ENCODE measurements at regions of chr19 and their contacts with region 1.

Region 1: DNA sequence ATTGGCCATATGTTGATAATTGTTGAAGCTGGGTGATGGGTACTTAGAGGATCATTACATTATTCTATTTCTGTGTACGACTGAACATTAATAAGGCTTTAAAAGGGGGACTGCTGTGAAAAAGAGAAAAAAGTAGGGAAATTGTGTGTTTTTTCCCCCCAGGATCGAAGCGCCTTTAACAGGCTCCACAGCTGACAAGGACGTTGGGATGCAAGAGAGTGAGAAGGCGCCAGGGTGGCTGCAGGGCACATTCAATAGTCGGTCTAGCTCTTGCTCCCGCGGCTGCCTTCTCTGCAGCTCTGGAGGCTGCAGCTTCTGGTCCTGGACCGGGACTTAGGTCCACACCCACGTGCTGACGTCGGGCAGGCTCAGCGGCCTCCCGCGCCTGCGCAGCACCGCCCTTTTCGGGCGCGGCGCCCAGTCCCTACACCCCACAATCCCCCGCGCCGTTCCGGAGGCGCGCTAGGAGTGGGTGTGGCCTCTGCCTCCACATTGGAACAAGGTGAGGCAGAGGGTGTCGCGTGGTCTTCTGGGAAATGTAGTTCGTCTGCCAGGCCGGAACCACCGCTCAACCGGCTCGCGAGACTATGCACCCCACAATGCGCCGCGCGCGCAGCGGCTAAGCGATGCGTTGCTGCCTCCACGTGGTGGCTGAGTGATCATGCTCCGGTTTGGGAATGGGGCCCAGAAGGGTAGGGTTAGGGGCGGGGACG is 4.9 kb upstream of the LRFN3 start:
- DNase-seq: peak; percentile 100
- ATAC-seq: peak; percentile 96
- H3K4me3 Mint-ChIP-seq: peak overlapping the region; percentile 67
- H3K27ac Mint-ChIP-seq: peak overlapping the region; percentile 86
- H3K4me1 Mint-ChIP-seq: peaks cover 26% of the 10 kb centered on the region
- H3K27me3 Mint-ChIP-seq: no peaks in the 10 kb centered on the region

Region 2: GRCh38 chr19:35545001-35545911 is 386.1 kb before region 1 on chr19 and contains the start of gene TMEM147:
- CTCF ChIA-PET with region 1: no interaction called
- POLR2A ChIA-PET with region 1: no interaction called
- intact Hi-C with region 1: loop called in 1 of 2 experiments (anchors 5 kb)
- DNase-seq: peak; percentile 93
- ATAC-seq: peak; percentile 77
- H3K4me3 Mint-ChIP-seq: peak within 1 kb of the TSS; percentile 92
- H3K27ac Mint-ChIP-seq: peak within 1 kb of the TSS; percentile 91
- H3K4me1 Mint-ChIP-seq: peaks cover 35% of the 10 kb centered on the region
- H3K27me3 Mint-ChIP-seq: no peaks in the 10 kb centered on the region
- total RNA-seq, gene TMEM147: 73.1 to 73.8 TPM

Region 3: GRCh38 chr19:35693830-35694599 is 237.3 kb before region 1 on chr19:
- CTCF ChIA-PET with region 1: interaction called, 6 read pairs
- POLR2A ChIA-PET with region 1: no interaction called
- intact Hi-C with region 1: loop called (anchors 1 kb)
- DNase-seq: peak; percentile 95
- ATAC-seq: peak; percentile 97
- H3K4me3 Mint-ChIP-seq: no peak overlapping the region
- H3K27ac Mint-ChIP-seq: peak overlapping the region; percentile 43
- H3K4me1 Mint-ChIP-seq: peaks cover 17% of the 10 kb centered on the region
- H3K27me3 Mint-ChIP-seq: no peaks in the 10 kb centered on the region

Region 4: GRCh38 chr19:35740423-35741202 is 190.7 kb before region 1 on chr19:
- CTCF ChIA-PET with region 1: interaction called, 4 read pairs
- POLR2A ChIA-PET with region 1: interaction called, 5 read pairs
- intact Hi-C with region 1: loop called (anchors 1 kb)
- DNase-seq: peak; percentile 99
- ATAC-seq: peak; percentile 67
- H3K4me3 Mint-ChIP-seq: peak overlapping the region; percentile 82
- H3K27ac Mint-ChIP-seq: peak overlapping the region; percentile 96
- H3K4me1 Mint-ChIP-seq: peaks cover 28% of the 10 kb centered on the region
- H3K27me3 Mint-ChIP-seq: no peaks in the 10 kb centered on the region

Region 5: DNA sequence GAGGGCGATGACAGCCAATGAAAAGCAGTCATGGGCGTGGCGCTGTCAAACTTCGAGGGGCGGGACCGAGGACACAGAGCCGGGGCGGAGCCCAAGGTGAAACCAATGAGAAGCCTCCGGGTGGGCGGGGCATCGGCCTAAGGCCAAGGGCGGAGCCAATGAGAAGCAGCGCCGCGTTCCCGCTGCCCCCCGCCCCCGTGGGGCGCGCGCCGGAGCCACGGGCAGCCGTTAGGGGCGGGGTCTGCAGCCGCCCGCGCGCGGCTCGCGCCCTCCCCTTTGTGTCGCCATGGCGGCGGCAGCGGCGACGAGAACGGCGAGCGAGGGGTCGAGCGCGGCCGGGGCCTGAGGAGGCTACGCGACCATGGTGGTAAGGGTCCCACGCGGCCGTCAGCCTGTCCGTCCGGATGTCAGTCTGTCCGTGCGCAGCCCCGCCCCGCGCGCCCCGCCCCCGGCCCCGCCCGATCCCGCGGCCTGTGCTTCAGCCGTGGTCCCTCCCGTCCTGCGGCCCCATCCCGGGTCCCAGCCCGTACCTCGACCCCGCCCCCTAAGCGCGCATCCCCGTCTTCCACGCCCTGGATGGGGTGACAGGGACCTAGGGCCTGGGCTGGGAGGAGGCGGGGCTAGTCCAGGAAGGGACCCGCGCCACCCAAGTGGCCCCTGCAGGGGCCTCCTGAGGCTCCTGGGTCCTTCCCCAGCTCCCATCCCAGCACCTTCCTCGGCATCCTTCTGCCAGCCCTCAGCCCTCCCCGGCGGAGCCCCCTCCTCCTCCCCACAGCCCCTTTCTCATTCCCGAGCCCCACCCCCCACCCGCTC is 155.8 kb before region 1 on chr19 and contains the start of gene ARHGAP33:
- CTCF ChIA-PET with region 1: no interaction called
- POLR2A ChIA-PET with region 1: no interaction called
- intact Hi-C with region 1: loop called in 1 of 2 experiments (anchors 1 kb)
- DNase-seq: peak; percentile 100
- ATAC-seq: peak; percentile 98
- H3K4me3 Mint-ChIP-seq: peak within 1 kb of the TSS; percentile 75
- H3K27ac Mint-ChIP-seq: no peak within 1 kb of the TSS
- H3K4me1 Mint-ChIP-seq: peaks cover 12% of the 10 kb centered on the region
- H3K27me3 Mint-ChIP-seq: no peaks in the 10 kb centered on the region
- total RNA-seq, gene ARHGAP33: 27.8 to 35.2 TPM

Region 6: DNA sequence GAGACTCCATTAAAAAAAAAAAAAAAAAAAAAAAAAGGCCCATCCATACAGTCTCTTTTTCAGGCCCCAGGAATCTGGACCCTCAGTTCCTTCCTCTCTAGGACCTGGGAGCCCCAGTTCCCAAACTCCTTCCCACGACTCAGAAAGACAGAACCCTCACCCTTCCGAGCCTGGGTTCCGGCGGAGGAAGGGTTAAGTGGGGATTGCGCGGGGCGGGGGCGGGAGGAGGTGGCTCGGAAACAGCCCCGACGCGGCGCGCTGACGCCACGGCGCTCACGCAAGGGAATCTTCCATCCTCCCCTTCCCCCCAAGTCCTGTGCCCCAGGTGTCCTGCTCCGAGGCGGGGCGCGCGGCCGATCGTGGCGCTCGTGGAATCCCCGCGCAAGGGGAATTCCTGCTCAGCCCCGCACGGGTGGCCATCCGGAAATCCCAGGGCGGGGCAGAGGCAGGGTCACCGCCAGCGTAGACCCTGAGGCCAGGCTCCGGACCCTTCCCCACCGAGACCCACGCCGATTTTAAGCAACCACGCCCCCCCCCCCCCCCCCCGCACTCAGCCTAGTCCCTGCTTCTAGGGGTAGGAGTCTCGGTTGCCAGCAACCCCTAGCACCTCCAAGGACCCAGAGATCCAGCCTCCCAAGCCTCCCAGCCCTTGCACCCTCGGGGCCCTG is 31.6 kb before region 1 on chr19:
- CTCF ChIA-PET with region 1: interaction called, 6 read pairs
- POLR2A ChIA-PET with region 1: interaction called, 4 read pairs
- intact Hi-C with region 1: loop called (anchors 1 kb)
- DNase-seq: peak; percentile 94
- ATAC-seq: peak; percentile 54
- H3K4me3 Mint-ChIP-seq: peak overlapping the region; percentile 75
- H3K27ac Mint-ChIP-seq: peak overlapping the region; percentile 94
- H3K4me1 Mint-ChIP-seq: peaks cover 65% of the 10 kb centered on the region
- H3K27me3 Mint-ChIP-seq: no peaks in the 10 kb centered on the region

Region 7: GRCh38 chr19:36014029-36014924 is 83.0 kb after region 1 on chr19 and contains the start of gene ALKBH6:
- CTCF ChIA-PET with region 1: interaction called, 3 read pairs
- POLR2A ChIA-PET with region 1: no interaction called
- intact Hi-C with region 1: loop called in 1 of 2 experiments (anchors 1 kb)
- DNase-seq: peak; percentile 100
- ATAC-seq: peak; percentile 98
- H3K4me3 Mint-ChIP-seq: peak within 1 kb of the TSS; percentile 96
- H3K27ac Mint-ChIP-seq: peak within 1 kb of the TSS; percentile 94
- H3K4me1 Mint-ChIP-seq: peaks cover 32% of the 10 kb centered on the region
- H3K27me3 Mint-ChIP-seq: no peaks in the 10 kb centered on the region
- total RNA-seq, gene ALKBH6: 40.6 to 42.2 TPM